ENCODE measurements at regions of chr15 and their contacts with region 1.

Region 1: GRCh38 chr15:45378149-45378912 is at the start of gene GATM:
- DNase-seq: peak; percentile 82 to 91 (median 86)
- H3K4me3 ChIP-seq: peak within 1 kb of the TSS; percentile 66 to 95 (median 83)
- H3K27ac ChIP-seq: peak within 1 kb of the TSS; percentile 78 to 99 (median 96)
- H3K27me3 ChIP-seq: no peaks in the 10 kb centered on the region
- CTCF ChIP-seq: peak in 33 of 56 donors; percentile 1 to 48 (median 22)
- total RNA-seq, gene GATM: 103 to 309 (median 166) TPM

Region 2: GRCh38 chr15:45198337-45199135 is 179.8 kb before region 1 on chr15:
- intact Hi-C with region 1: loop called (anchors 5 to 10 kb)
- DNase-seq: peak; percentile 90 to 98 (median 94)
- H3K4me3 ChIP-seq: peak overlapping the region; percentile 47 to 94 (median 76)
- H3K27ac ChIP-seq: peak overlapping the region; percentile 85 to 100 (median 99)
- H3K27me3 ChIP-seq: no peaks in the 10 kb centered on the region
- CTCF ChIP-seq: peak; percentile 57 to 91 (median 78)

Region 3: GRCh38 chr15:45320581-45321205 is 57.6 kb before region 1 on chr15:
- intact Hi-C with region 1: loop called (anchors 5 to 10 kb)
- DNase-seq: no peak
- H3K4me3 ChIP-seq: no peak overlapping the region
- H3K27ac ChIP-seq: no peak overlapping the region
- H3K27me3 ChIP-seq: no peaks in the 10 kb centered on the region
- CTCF ChIP-seq: no peak

Region 4: GRCh38 chr15:45326741-45327140 is 51.6 kb before region 1 on chr15:
- intact Hi-C with region 1: loop called (anchors 5 to 10 kb)
- DNase-seq: peak in 2 of 10 donors; percentile 18 to 39
- H3K4me3 ChIP-seq: peak overlapping the region in 39 of 59 donors; percentile 1 to 56 (median 16)
- H3K27ac ChIP-seq: peak overlapping the region in 50 of 59 donors; percentile 1 to 83 (median 64)
- H3K27me3 ChIP-seq: peaks cover 0 to 2% (median 0%) of the 10 kb centered on the region in 45 donors
- CTCF ChIP-seq: peak in 1 of 56 donors; percentile 22